Activated CD4-positive, alpha-beta memory T cell treated with anti-CD3 and anti-CD28 coated beads for 36 hours (primary cell): ENCODE measurements at regions of chr18 and their contacts with region 1.

Region 1: DNA sequence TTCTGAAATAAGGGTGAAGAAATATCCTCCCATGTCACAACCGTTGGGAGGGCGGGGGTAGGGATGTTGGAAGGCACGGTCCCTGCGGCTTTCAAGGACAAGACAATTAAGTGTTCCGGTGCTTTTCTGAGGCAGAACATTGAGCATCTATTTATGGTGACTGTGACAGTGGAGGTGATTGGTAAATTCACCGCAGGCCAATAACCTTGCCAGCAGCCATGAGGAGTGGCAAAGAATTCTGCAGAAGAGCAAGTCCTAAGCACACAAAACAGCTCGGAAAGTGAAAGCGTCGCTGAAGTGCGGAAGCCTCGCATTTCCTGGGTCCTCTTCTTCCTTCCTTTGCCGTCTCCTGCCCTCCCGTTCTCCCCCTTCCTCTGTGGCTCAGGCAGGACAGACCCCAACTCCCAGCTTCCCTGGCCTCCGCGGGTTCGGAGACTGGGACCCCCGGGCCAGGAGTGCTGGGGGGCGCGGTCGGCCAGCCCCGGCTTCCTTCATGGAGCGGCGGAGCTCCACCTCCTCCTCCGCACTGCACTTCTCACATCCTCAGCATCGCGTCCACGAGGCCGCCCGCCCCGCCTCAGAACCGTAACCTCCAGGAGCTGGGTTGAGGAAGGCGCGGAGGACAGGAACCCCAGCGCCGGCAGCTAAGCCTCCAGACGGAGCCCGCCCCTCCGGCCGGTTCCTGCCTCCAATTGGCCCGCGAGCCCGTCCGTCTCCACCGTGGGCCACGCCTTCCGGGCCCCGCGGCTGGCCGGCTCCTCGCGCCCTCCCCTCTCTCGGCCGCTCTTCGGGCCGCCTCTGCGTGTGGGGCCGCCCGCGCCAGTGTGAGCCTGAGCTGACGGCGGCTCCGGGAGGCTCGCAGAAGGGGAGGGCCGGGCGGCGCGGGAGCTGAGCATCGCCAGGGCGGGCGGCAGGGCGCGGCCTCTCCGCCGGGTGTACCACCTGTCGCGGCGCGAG is at the start of gene ME2:
- DNase-seq: peak; percentile 93
- H3K4me3 Mint-ChIP-seq: peak within 1 kb of the TSS; percentile 96
- H3K27ac Mint-ChIP-seq: peak within 1 kb of the TSS; percentile 97
- H3K4me1 Mint-ChIP-seq: peaks cover 21% of the 10 kb centered on the region
- H3K27me3 Mint-ChIP-seq: peaks cover under 1% of the 10 kb centered on the region
- total RNA-seq, gene ME2: 111 to 115 TPM

Region 2: DNA sequence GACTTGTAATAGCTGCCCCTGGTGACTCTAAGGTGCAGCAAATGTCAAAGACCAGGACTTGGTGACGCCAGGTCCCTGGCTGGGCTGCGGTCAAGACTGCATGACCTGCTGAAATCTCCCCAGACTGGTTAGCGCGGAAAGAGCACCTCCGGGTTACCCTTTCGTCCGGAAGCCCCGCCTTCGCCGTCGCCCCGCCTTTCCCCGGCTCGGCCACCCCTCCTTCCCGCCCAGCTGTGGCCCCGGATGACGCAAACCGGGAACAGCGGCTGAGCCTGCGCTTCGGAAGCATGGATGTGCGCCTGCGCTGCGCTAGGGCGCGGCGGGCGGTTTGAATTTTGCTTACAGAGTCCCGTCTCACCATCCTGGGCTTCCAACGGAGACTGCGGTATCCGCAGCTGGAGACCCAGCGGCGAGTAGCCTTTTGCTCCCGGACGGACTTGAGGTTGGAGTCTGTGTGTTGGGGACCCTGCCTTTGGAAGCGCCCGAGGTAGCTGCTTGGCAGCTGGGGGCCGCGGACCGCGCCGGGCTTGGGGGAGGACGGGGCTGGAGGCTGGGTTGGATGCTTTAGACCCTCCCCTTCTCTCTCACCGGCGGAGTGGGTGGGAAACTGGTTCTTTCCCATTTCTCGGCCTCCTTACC is 503.8 kb before region 1 on chr18 and contains the start of gene SKA1:
- CTCF ChIA-PET with region 1: no interaction called
- POLR2A ChIA-PET with region 1: no interaction called
- intact Hi-C with region 1: loop called (anchors 2 kb)
- DNase-seq: peak; percentile 95
- H3K4me3 Mint-ChIP-seq: peak within 1 kb of the TSS; percentile 87
- H3K27ac Mint-ChIP-seq: peak within 1 kb of the TSS; percentile 77
- H3K4me1 Mint-ChIP-seq: no peaks in the 10 kb centered on the region
- H3K27me3 Mint-ChIP-seq: peaks cover 5% of the 10 kb centered on the region
- total RNA-seq, gene SKA1: 44.2 to 46.0 TPM

Region 3: GRCh38 chr18:50902797-50903196 is 24.2 kb after region 1 on chr18:
- CTCF ChIA-PET with region 1: interaction called, 3 read pairs
- POLR2A ChIA-PET with region 1: no interaction called
- intact Hi-C with region 1: loop called (anchors 1 kb)
- DNase-seq: no peak
- H3K4me3 Mint-ChIP-seq: no peak overlapping the region
- H3K27ac Mint-ChIP-seq: no peak overlapping the region
- H3K4me1 Mint-ChIP-seq: peaks cover 28% of the 10 kb centered on the region
- H3K27me3 Mint-ChIP-seq: no peaks in the 10 kb centered on the region

Region 4: GRCh38 chr18:50967714-50968661 is 89.4 kb after region 1 on chr18 and contains the start of gene ELAC1:
- CTCF ChIA-PET with region 1: interaction called, 4 read pairs
- POLR2A ChIA-PET with region 1: interaction called, 21 read pairs
- intact Hi-C with region 1: loop called (anchors 1 kb)
- DNase-seq: peak; percentile 71
- H3K4me3 Mint-ChIP-seq: peak within 1 kb of the TSS; percentile 96
- H3K27ac Mint-ChIP-seq: peak within 1 kb of the TSS; percentile 94
- H3K4me1 Mint-ChIP-seq: peaks cover 26% of the 10 kb centered on the region
- H3K27me3 Mint-ChIP-seq: no peaks in the 10 kb centered on the region
- total RNA-seq, gene ELAC1: 4.7 to 5.9 TPM

Region 5: GRCh38 chr18:51029694-51030536 is 151.3 kb after region 1 on chr18 and contains the start of gene SMAD4:
- CTCF ChIA-PET with region 1: no interaction called
- POLR2A ChIA-PET with region 1: interaction called, 23 read pairs
- intact Hi-C with region 1: loop called (anchors 1 kb)
- DNase-seq: peak; percentile 99
- H3K4me3 Mint-ChIP-seq: peak within 1 kb of the TSS; percentile 99
- H3K27ac Mint-ChIP-seq: peak within 1 kb of the TSS; percentile 91
- H3K4me1 Mint-ChIP-seq: peaks cover 58% of the 10 kb centered on the region
- H3K27me3 Mint-ChIP-seq: no peaks in the 10 kb centered on the region
- total RNA-seq, gene SMAD4: 72.5 to 72.7 TPM

Region 6: DNA sequence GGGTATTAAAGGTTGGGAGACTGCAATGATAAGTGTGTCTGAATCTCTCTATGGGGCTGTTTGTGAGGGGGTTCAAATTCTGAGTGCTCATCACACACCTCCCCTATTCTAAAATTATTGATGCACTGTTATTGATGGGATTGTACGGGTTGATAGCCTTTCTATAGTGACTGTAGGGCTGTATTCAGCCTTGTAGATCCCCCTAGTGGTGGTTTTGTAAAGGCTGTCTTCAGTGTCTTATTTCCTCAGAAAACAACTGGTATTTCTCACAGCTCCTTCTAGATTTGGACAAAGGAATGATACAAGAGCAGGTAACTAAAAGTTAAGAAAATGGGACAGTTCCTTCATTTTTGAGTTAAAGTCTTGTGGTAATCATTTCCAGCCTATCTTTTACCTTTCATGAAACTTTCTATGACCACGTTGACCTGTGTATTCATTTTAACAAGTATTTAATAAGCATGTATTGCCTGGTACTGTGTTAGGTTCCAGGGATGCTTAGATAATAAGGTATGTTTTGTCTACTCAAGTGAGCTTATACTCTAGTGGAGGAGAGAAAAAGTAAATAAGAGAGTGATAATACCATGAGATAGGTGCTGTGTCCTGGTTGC is 172.6 kb after region 1 on chr18:
- CTCF ChIA-PET with region 1: interaction called, 9 read pairs
- POLR2A ChIA-PET with region 1: interaction called, 5 read pairs
- intact Hi-C with region 1: loop called (anchors 1 kb)
- DNase-seq: no peak
- H3K4me3 Mint-ChIP-seq: no peak overlapping the region
- H3K27ac Mint-ChIP-seq: peak overlapping the region; percentile 49
- H3K4me1 Mint-ChIP-seq: peaks cover 39% of the 10 kb centered on the region
- H3K27me3 Mint-ChIP-seq: no peaks in the 10 kb centered on the region

Region 7: GRCh38 chr18:51153659-51154371 is 275.2 kb after region 1 on chr18:
- CTCF ChIA-PET with region 1: no interaction called
- POLR2A ChIA-PET with region 1: no interaction called
- intact Hi-C with region 1: loop called (anchors 5 kb)
- DNase-seq: peak; percentile 70
- H3K4me3 Mint-ChIP-seq: peak overlapping the region; percentile 70
- H3K27ac Mint-ChIP-seq: peak overlapping the region; percentile 97
- H3K4me1 Mint-ChIP-seq: peaks cover 47% of the 10 kb centered on the region
- H3K27me3 Mint-ChIP-seq: no peaks in the 10 kb centered on the region